Activated CD4-positive, alpha-beta memory T cell treated with anti-CD3 and anti-CD28 coated beads for 36 hours (primary cell): ENCODE measurements at regions of chr18 and their contacts with region 1.

Region 1: DNA sequence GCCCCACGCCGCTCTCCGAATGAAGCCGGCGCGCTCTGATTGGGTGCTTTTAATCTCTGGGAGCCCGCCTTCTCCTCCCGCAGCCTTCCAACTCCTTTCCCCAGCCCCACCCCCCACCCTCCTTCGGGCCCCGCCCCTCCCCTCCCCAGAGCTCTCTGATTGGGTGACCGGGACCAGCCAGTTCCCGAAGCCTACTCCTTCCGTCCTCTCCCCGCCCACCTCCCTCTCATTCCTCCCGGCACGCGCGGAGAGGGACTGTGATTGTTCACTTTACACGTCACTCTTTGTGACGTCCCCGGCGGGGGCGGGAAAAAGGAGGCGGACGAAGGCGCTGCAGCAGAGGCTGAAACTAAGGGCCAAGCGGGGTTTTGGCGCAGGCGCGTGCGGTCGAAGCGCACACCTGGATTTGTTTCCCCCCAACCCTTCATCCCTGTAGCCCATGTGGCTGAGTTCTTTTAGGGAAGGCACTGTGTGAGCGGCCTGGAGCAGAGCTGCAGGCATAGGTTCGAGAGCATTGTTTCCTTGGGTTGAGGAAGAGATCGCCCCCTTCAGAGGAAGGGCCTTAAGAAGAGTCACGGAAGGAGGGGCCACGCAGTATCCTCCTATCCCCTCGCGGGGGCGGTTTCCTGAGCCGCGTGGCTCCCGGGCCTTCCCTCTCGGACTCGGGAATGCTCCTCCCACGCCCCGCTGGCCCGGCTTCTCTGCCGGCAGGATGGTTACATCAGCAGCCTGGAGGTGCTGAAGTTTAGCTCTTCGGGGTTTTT is at the start of gene MEX3C:
- DNase-seq: peak; percentile 100
- H3K4me3 Mint-ChIP-seq: peak within 1 kb of the TSS; percentile 83
- H3K27ac Mint-ChIP-seq: peak within 1 kb of the TSS; percentile 99
- H3K4me1 Mint-ChIP-seq: peaks cover 20% of the 10 kb centered on the region
- H3K27me3 Mint-ChIP-seq: no peaks in the 10 kb centered on the region
- total RNA-seq, gene MEX3C: 56.6 to 61.5 TPM

Region 2: GRCh38 chr18:49486953-49487710 is 1710.7 kb before region 1 on chr18 and contains the start of gene C18orf32:
- CTCF ChIA-PET with region 1: no interaction called
- POLR2A ChIA-PET with region 1: interaction called, 3 read pairs
- intact Hi-C with region 1: loop called (anchors 5 kb)
- DNase-seq: peak; percentile 96
- H3K4me3 Mint-ChIP-seq: peak within 1 kb of the TSS; percentile 97
- H3K27ac Mint-ChIP-seq: peak within 1 kb of the TSS; percentile 97
- H3K4me1 Mint-ChIP-seq: peaks cover 59% of the 10 kb centered on the region
- H3K27me3 Mint-ChIP-seq: no peaks in the 10 kb centered on the region
- total RNA-seq, gene C18orf32: 26.5 to 27.5 TPM

Region 3: DNA sequence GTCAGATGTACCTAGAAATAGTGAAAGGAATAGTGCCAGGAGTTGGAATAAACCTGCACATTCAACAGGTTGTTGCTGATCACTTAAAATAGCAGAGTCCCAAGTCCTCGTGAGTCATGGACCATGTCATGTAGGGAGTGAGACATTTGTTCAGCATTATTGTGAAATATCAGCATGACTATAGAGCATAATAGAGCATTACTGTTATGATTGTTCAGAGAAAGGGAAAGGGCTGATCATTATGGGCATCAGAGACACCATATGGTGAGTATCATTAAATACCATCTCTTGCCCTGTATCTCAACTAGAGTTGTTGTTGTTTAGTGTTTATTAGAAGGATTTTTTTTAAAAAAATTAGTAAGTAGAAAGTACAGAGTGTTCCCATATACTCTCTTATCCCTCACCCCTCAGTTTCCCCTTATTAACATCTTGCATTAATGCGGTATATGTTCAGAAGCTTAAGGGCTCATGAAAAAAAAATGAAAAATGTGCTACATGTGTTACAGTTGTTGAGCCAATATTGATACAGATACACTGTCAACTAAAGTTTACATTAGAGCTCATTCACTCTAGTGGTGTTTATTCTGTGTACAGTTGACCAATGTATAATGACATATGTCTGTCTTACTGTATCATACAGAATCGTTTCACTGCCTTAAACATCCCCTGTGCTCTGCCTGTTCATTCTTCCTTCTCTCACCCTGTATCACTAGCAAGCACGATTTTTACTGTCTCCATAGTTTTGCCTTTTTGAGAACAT is 224.3 kb before region 1 on chr18:
- CTCF ChIA-PET with region 1: no interaction called
- POLR2A ChIA-PET with region 1: no interaction called
- intact Hi-C with region 1: loop called (anchors 5 kb)
- DNase-seq: peak; percentile 23
- H3K4me3 Mint-ChIP-seq: no peak overlapping the region
- H3K27ac Mint-ChIP-seq: peak overlapping the region; percentile 75
- H3K4me1 Mint-ChIP-seq: peaks cover 34% of the 10 kb centered on the region
- H3K27me3 Mint-ChIP-seq: no peaks in the 10 kb centered on the region

Region 4: DNA sequence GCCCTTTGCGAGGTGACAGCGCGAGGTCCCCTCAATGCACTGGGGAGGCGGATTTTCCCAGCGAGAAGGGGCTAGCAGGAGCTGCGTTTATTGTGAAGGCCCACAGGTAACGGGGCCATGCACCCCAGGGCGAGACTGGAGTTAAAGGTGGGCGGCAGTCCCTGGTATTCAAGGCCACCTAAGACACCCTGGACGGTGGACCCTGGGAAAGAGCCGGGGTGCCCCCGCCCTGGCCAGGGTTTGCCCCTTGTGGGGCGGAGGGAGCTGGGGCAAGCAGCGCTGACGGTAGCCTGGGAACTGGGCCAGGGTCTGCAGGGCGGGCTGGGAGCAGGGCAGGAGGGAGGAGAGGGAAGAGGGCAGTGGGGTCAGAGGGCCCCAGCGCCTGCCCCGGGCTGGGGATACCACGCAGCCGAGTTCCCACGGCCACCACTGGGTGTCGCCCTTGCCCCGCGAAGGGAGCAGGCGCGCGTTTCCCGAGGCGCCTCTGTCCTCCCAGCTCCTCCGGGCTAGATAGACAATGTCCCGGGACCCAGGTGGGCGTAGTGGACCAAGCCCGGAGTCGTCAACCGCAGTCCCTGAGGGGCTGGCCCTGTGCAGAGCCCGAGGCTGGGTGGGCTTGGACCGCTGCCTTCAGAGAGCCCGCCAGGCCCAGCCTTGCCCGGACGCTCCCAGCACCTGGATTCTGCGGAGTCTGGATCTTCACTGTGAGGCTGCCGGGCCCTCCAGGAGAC is 87.6 kb before region 1 on chr18:
- CTCF ChIA-PET with region 1: interaction called, 4 read pairs
- POLR2A ChIA-PET with region 1: no interaction called
- intact Hi-C with region 1: loop called (anchors 2 kb)
- DNase-seq: peak; percentile 79
- H3K4me3 Mint-ChIP-seq: no peak overlapping the region
- H3K27ac Mint-ChIP-seq: no peak overlapping the region
- H3K4me1 Mint-ChIP-seq: peaks cover 15% of the 10 kb centered on the region
- H3K27me3 Mint-ChIP-seq: no peaks in the 10 kb centered on the region

Region 5: GRCh38 chr18:51171223-51171622 is 26.6 kb before region 1 on chr18:
- CTCF ChIA-PET with region 1: interaction called, 3 read pairs
- POLR2A ChIA-PET with region 1: interaction called, 32 read pairs
- intact Hi-C with region 1: loop called (anchors 1 kb)
- DNase-seq: no peak
- H3K4me3 Mint-ChIP-seq: peak overlapping the region; percentile 26
- H3K27ac Mint-ChIP-seq: peak overlapping the region; percentile 97
- H3K4me1 Mint-ChIP-seq: peaks cover 63% of the 10 kb centered on the region
- H3K27me3 Mint-ChIP-seq: no peaks in the 10 kb centered on the region

Region 6: GRCh38 chr18:51235011-51235789 is 37.4 kb after region 1 on chr18:
- CTCF ChIA-PET with region 1: interaction called, 4 read pairs
- POLR2A ChIA-PET with region 1: interaction called, 8 read pairs
- intact Hi-C with region 1: loop called (anchors 2 kb)
- DNase-seq: peak; percentile 69
- H3K4me3 Mint-ChIP-seq: no peak overlapping the region
- H3K27ac Mint-ChIP-seq: peak overlapping the region; percentile 47
- H3K4me1 Mint-ChIP-seq: peaks cover 22% of the 10 kb centered on the region
- H3K27me3 Mint-ChIP-seq: peaks cover 8% of the 10 kb centered on the region